ENCODE measurements at regions of chr3 and their contacts with region 1.

Region 1: DNA sequence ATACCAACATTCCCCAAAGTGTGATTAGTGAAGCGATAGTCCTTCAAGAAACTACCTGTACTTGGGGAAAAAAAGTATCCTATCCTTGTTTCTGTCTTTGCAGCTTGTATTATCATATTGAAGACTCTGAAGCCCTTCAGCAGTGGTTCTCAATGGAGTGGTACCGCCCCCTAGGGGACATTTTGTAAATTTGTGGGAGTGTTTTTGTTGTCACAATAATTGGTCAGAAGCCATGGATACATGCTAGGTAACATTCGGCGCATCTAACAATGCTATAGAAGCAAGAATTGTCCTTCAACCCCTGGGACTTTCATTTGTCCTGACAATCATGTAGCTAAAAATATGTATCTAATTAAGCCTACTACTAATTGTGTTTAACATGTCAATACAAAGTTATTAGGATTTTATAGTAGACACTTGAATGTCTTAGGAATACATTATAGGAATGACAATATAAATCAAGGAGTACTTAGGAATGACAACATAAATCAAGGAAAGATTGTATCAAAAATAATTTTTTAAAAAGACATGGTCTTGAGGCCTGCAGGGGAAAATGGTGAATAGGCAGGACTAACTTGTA is 53.7 kb downstream of the NMD3 start:
- DNase-seq: peak; percentile 66
- H3K4me3 ChIP-seq: no peak overlapping the region
- H3K27ac ChIP-seq: no peak overlapping the region
- H3K4me1 ChIP-seq: no peaks in the 10 kb centered on the region
- H3K27me3 ChIP-seq: no peaks in the 10 kb centered on the region

Region 2: GRCh38 chr3:160612386-160613075 is 662.3 kb before region 1 on chr3:
- in situ Hi-C with region 1: no loop called
- DNase-seq: peak; percentile 2
- H3K4me3 ChIP-seq: no peak overlapping the region
- H3K27ac ChIP-seq: no peak overlapping the region
- H3K4me1 ChIP-seq: peaks cover 14% of the 10 kb centered on the region
- H3K27me3 ChIP-seq: 0 out of 2 replicates have a peak, but pooled peaks cover 4% of the 10 kb centered on the region

Region 3: DNA sequence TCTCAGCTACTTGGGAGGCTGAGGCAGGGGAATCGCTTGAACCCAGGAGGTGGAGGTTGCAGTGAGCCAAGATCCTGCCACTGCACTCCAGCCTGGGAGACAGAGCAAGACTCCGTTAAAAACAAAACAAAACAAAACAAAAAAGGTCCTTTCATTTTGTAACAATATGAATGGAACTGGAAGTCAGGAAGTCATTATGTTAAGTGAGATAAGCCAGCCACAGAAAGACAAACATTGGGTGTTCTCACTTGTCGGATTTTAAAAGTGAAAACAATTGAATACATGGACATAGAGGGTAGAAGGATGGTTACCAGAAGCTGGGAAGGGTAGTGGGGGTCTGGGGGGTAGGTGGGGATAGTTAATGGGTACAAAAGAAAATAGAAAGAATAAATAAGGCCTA is 157.2 kb before region 1 on chr3:
- in situ Hi-C with region 1: no loop called
- DNase-seq: no peak
- H3K4me3 ChIP-seq: no peak overlapping the region
- H3K27ac ChIP-seq: no peak overlapping the region
- H3K4me1 ChIP-seq: no peaks in the 10 kb centered on the region
- H3K27me3 ChIP-seq: no peaks in the 10 kb centered on the region

Region 4: GRCh38 chr3:161203485-161204098 is 71.2 kb before region 1 on chr3:
- in situ Hi-C with region 1: no loop called
- DNase-seq: no peak
- H3K4me3 ChIP-seq: no peak overlapping the region
- H3K27ac ChIP-seq: no peak overlapping the region
- H3K4me1 ChIP-seq: no peaks in the 10 kb centered on the region
- H3K27me3 ChIP-seq: no peaks in the 10 kb centered on the region

Region 5: GRCh38 chr3:161415497-161416251 is 140.9 kb after region 1 on chr3:
- in situ Hi-C with region 1: loop called (anchors 5 kb)
- DNase-seq: peak; percentile 86
- H3K4me3 ChIP-seq: peak overlapping the region; percentile 11; the same call in 1 of the 2 replicates
- H3K27ac ChIP-seq: peak overlapping the region; percentile 81
- H3K4me1 ChIP-seq: peaks cover 23% of the 10 kb centered on the region
- H3K27me3 ChIP-seq: peaks cover 16% of the 10 kb centered on the region

Region 6: DNA sequence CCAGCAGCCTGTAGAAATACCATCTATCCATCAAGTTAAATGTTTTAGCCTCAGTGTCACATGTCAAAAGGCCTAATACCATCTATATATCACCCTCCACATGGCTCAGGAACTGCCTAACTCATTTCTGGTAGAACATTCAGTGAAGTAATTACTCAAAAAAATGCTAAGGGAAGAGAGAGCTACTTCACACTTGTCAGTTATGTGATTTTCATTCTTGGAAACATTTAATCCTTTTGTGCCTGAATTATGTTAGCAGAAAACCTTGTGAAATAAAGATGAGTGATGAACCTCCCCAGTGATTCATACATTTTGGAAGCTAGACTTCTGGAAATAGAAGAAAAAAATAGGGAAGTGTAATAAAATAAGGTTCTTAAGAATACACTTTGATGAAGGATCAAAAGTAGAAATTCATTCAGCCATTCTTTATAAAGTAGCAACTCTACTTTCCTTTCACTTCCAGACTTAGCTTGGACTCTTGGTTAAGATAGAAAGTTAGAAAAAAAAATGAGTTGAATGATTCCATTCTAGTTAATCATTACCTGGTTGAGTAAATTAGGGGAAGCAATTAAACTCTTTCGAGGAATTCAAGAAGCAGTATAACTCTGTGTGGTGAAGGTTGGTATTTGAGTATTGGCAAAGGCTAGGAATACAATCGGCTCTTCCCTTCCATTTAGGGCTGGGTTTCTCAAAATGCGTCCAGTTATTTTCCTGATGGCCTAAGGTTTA is 225.4 kb after region 1 on chr3:
- in situ Hi-C with region 1: no loop called
- DNase-seq: peak; percentile 10
- H3K4me3 ChIP-seq: no peak overlapping the region
- H3K27ac ChIP-seq: no peak overlapping the region
- H3K4me1 ChIP-seq: no peaks in the 10 kb centered on the region
- H3K27me3 ChIP-seq: no peaks in the 10 kb centered on the region

Measured in GM23248 (cell line).